ENCODE measurements at regions of chr5 and their contacts with region 1.

Region 1: DNA sequence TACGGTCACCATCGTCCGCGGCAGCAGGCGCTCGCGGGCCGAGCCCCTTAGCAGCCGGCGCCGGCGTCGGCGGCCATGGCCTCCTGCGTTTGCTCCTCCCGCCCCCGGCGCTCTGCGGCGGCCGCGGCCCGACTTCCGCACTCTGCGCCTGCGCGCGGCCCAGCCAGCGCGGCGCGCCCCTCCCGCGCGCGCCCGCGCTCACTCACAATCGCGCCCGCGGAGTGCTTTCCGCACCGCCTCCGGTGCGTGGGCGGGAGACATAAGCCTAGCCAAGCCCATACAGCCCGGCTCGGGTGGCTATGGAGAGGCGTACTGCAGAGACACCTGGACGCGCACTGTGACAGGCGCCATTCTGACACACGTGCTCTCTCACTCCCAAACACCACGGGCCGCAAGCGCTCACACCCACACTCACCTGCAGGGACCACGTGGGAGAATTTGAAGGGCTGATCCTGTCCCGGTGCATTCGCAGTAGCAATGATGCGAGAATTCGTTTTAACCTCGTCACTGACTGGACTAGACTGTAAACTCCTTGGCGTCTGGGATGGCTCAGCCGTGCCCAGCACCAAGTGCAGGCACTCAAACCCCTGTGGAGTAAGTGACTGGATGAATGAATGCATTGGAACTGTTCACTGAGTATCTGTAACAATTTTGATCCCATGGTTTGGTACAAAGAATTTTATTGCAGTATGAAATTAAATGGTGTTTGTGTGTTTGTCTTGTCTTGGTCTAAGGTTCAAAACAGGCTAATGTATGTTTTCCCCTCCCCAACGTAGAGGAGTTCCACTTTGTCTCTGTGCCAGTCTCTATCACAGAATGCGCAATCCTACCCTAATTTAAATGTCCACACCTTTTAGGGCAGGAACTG is at the start of gene RNF145:
- DNase-seq: peak; percentile 74 to 86
- ATAC-seq: peak; percentile 74 to 80
- H3K4me3 ChIP-seq: peak within 1 kb of the TSS; percentile 77
- H3K27ac ChIP-seq: peak within 1 kb of the TSS; percentile 97 to 100
- H3K4me1 ChIP-seq: peaks cover 27% of the 10 kb centered on the region
- CTCF ChIP-seq: no peak
- EP300 ChIP-seq: no peak
- POLR2A ChIP-seq: peak; percentile 45; the same call in 1 of the 2 replicates
- RAD21 ChIP-seq: no peak; a peak in 1 of 5 replicates
- polyA plus RNA-seq, gene RNF145: 122 and 147 TPM in 2 replicates

Region 2: DNA sequence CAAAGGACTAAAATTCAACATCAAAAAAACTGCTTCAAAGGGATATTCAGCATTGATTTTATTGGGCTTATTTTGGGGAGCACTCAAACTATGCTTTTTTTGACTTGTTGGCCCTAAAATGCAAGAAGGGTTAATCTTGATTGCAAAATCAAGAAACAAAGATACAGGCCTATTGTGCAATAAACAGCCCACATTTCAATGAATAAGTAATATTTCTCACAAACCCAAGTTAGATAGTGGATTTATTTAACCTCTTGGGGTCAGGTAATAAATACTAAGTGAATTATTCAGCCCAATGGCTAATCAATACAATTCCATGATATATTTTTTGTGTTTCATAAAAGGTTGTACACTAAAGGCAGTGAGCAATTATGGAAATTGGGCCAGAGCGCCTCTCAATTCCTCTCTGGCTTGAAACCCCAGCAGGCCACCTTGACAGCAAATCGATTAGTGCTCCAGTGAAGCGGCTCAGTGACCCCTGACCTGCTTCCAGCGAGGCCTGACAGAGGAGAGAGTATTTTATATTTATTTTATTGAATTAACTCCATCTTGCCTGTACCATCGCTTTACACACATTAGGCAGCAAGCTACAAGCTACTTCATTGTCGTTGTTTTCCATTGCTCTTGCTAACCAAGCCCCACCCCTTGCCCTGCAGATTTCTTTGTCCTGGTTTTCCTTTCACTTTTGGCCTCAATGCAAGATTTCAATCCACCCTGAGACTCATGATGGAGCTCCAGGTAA is 175.4 kb before region 1 on chr5:
- CTCF ChIA-PET with region 1: no interaction called
- POLR2A ChIA-PET with region 1: no interaction called
- DNase-seq: no peak
- ATAC-seq: no peak
- H3K4me3 ChIP-seq: no peak overlapping the region
- H3K27ac ChIP-seq: no peak overlapping the region
- H3K4me1 ChIP-seq: no peaks in the 10 kb centered on the region
- CTCF ChIP-seq: no peak
- EP300 ChIP-seq: no peak
- POLR2A ChIP-seq: no peak
- RAD21 ChIP-seq: no peak

Region 3: GRCh38 chr5:159178978-159179377 is 30.7 kb before region 1 on chr5:
- CTCF ChIA-PET with region 1: no interaction called
- POLR2A ChIA-PET with region 1: interaction called, 14 read pairs
- DNase-seq: peak; percentile 57 to 97
- ATAC-seq: peak; percentile 92 to 96
- H3K4me3 ChIP-seq: peak overlapping the region; percentile 16; the same call in 1 of the 3 replicates
- H3K27ac ChIP-seq: peak overlapping the region in 1 of 2 experiments; percentile 94; a peak in 4 of 6 replicates
- H3K4me1 ChIP-seq: peaks cover 95% of the 10 kb centered on the region
- CTCF ChIP-seq: no peak
- EP300 ChIP-seq: peak; percentile 94 to 96
- POLR2A ChIP-seq: no peak
- RAD21 ChIP-seq: peak in 1 of 2 experiments; percentile 41; a peak in 1 of 5 replicates

Region 4: DNA sequence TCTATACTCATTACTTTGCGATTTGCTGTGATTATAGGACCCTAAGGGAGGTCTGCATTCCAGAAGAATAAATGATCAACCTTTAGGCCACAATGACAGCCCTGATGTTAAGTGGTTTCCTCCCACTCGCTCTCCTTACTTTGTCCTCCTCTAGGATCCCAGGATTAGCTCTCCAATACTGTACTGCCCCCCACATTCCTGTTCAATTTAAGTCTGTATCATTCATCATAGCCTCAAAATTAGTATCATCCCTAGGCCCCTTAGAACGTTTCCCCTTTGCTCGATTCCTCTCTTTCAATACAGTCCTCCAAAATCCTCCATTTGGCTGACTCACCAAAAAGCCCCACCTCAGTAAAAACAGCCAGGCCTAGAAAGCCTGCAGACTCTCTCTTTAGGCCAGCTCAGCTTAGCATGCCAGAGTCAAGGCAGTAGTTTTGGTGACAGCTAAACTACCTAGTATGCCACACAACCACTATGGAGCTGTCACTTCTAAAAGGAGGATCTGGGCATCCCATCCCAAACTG is 24.8 kb before region 1 on chr5:
- CTCF ChIA-PET with region 1: interaction called, 6 read pairs
- POLR2A ChIA-PET with region 1: interaction called, 14 read pairs
- DNase-seq: peak in 1 of 2 experiments; percentile 65
- ATAC-seq: peak; percentile 72 to 74
- H3K4me3 ChIP-seq: no peak overlapping the region
- H3K27ac ChIP-seq: peak overlapping the region; percentile 91 to 94
- H3K4me1 ChIP-seq: peaks cover 98% of the 10 kb centered on the region
- CTCF ChIP-seq: no peak
- EP300 ChIP-seq: peak in 1 of 2 experiments; percentile 61; a peak in 2 of 5 replicates
- POLR2A ChIP-seq: no peak
- RAD21 ChIP-seq: no peak

Region 5: GRCh38 chr5:159198063-159199036 is 11.3 kb before region 1 on chr5:
- CTCF ChIA-PET with region 1: interaction called, 11 read pairs
- POLR2A ChIA-PET with region 1: interaction called, 6 read pairs
- DNase-seq: no peak
- ATAC-seq: peak in 1 of 2 experiments; percentile 47; a peak in 3 of 6 replicates
- H3K4me3 ChIP-seq: no peak overlapping the region
- H3K27ac ChIP-seq: peak overlapping the region in 1 of 2 experiments; percentile 30; a peak in 2 of 6 replicates
- H3K4me1 ChIP-seq: peaks cover 96% of the 10 kb centered on the region
- CTCF ChIP-seq: no peak
- EP300 ChIP-seq: no peak
- POLR2A ChIP-seq: no peak
- RAD21 ChIP-seq: no peak

Region 6: GRCh38 chr5:159227452-159227851 is 17.8 kb after region 1 on chr5:
- CTCF ChIA-PET with region 1: no interaction called
- POLR2A ChIA-PET with region 1: no interaction called
- DNase-seq: no peak
- ATAC-seq: no peak
- H3K4me3 ChIP-seq: no peak overlapping the region
- H3K27ac ChIP-seq: peak overlapping the region; percentile 52 to 82; a peak in 5 of 6 replicates
- H3K4me1 ChIP-seq: peaks cover 27% of the 10 kb centered on the region
- CTCF ChIP-seq: no peak
- EP300 ChIP-seq: no peak
- POLR2A ChIP-seq: no peak
- RAD21 ChIP-seq: no peak

Region 7: DNA sequence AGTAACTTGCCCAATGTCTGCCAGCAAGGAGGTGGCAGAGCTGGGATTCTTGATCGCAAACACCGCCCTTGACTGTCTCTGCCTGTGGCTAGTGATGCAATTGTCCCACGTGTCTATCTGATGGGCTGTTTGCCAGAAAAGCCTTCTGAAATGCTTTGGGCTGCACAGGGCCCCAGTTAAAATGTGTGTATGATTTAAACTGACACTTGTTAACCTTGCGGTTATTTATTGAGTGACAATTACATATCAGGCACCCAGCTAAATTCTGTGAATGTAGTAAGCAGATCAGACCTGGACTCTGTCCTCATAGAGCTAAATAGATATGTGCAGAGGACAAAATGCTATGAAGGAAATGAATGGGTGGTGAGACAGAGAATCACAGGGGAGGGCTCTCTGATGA is 132.2 kb after region 1 on chr5:
- CTCF ChIA-PET with region 1: no interaction called
- POLR2A ChIA-PET with region 1: no interaction called
- DNase-seq: peak; percentile 61 to 76
- ATAC-seq: peak; percentile 79 to 80
- H3K4me3 ChIP-seq: no peak overlapping the region
- H3K27ac ChIP-seq: peak overlapping the region; percentile 8 to 65; a peak in 4 of 6 replicates
- H3K4me1 ChIP-seq: peaks cover 34% of the 10 kb centered on the region
- CTCF ChIP-seq: no peak
- EP300 ChIP-seq: peak in 1 of 2 experiments; percentile 17; a peak in 1 of 5 replicates
- POLR2A ChIP-seq: no peak
- RAD21 ChIP-seq: no peak

Region 8: GRCh38 chr5:159497221-159497620 is 287.5 kb after region 1 on chr5:
- CTCF ChIA-PET with region 1: no interaction called
- POLR2A ChIA-PET with region 1: no interaction called
- DNase-seq: no peak
- ATAC-seq: no peak
- H3K4me3 ChIP-seq: no peak overlapping the region
- H3K27ac ChIP-seq: no peak overlapping the region
- H3K4me1 ChIP-seq: no peaks in the 10 kb centered on the region
- CTCF ChIP-seq: no peak
- EP300 ChIP-seq: no peak
- POLR2A ChIP-seq: no peak
- RAD21 ChIP-seq: no peak

Measured in A549 (cell line).